ENCODE measurements at regions of chr10 and their contacts with region 1.

Region 1: DNA sequence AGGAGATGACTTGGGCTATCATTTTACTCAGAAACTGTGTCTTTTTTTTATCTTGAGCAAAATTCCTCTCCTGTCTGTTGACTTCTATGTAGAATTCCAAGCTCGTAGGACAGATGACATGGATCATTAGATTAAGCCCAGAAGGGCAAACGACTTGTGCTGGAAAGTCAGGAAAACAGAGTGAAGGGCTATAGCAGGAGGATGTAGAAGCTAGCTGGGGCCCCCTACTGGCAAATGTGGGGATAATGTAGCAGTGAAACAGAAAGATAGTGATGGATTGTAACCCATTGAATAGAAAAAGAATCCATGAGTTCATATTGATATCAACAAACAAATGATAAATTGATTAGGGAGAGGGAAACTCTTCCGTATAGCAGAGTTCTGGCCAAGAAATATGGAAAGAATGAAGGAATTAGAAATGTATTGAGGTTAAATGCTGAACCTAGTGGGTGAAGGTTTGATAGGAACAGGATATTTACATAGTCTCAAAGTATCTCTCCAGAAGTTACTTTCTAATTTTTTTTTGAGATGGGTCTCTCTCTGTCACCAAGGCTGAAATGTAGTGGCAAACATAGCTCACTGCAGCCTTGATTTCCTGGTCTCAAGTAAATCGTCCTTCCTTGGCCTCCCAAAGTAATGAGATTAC is 103.6 kb downstream of the LYZL1 start:
- DNase-seq: peak; percentile 60
- ATAC-seq: peak; percentile 63
- H3K4me3 Mint-ChIP-seq: no peak overlapping the region
- H3K27ac Mint-ChIP-seq: no peak overlapping the region
- H3K4me1 Mint-ChIP-seq: no peaks in the 10 kb centered on the region
- H3K27me3 Mint-ChIP-seq: peaks cover 2% of the 10 kb centered on the region

Region 2: GRCh38 chr10:28892816-28893547 is 499.5 kb before region 1 on chr10:
- CTCF ChIA-PET with region 1: no interaction called
- POLR2A ChIA-PET with region 1: no interaction called
- intact Hi-C with region 1: no loop called
- DNase-seq: no peak
- ATAC-seq: no peak
- H3K4me3 Mint-ChIP-seq: no peak overlapping the region
- H3K27ac Mint-ChIP-seq: no peak overlapping the region
- H3K4me1 Mint-ChIP-seq: no peaks in the 10 kb centered on the region
- H3K27me3 Mint-ChIP-seq: no peaks in the 10 kb centered on the region

Region 3: GRCh38 chr10:29409241-29410057 is 16.9 kb after region 1 on chr10:
- CTCF ChIA-PET with region 1: interaction called, 21 read pairs
- POLR2A ChIA-PET with region 1: no interaction called
- intact Hi-C with region 1: no loop called
- DNase-seq: peak; percentile 64
- ATAC-seq: peak; percentile 63
- H3K4me3 Mint-ChIP-seq: peak overlapping the region; percentile 96
- H3K27ac Mint-ChIP-seq: peak overlapping the region; percentile 92
- H3K4me1 Mint-ChIP-seq: peaks cover 33% of the 10 kb centered on the region
- H3K27me3 Mint-ChIP-seq: no peaks in the 10 kb centered on the region